Right ventricle myocardium superior (tissue), 1 donor: ENCODE measurements at regions of chr6 and their contacts with region 1.

Region 1: DNA sequence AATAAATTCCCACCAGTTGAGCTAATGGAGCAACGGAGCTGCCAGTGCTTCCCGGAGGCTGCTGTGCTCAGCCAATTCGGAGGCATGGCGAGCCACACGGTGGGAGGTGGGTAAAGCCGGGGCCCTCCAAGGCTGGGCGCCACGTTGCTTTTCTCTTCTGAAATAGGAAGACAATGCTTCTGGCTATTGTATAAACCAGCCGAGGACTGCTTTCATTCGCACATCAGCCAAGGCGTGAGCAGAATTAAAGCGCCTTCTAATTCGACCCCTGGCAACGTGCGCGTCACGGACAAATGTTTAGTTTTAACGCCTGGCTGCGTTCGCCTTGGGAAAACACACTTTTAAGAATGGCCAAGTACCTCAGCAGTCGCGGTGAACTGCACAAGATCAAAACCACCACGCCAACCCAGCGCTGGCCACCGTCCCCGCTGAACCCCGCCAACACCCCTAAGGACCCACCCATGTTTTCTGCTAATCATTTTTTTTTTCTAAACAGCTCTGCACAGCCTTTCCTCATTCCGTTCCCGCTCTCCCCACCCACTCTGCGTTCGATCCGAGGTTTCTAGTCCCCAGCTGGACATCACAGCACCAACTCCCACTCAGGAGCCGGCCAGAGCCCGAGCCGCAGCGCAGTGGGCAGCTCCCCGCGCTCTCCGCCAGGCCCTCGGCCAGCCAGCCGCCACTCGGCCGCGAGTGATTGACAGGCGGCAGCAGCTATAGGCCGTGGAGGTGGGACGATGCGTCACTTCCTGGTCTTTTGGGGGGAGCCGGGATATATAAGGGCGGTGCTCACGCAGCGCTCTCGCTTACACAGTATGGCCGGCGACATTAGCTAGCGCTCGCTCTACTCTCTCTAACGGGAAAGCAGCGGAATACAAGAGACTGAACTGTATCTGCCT is at the start of gene AMD1:
- DNase-seq: peak; percentile 99
- ATAC-seq: peak; percentile 89
- total RNA-seq, gene AMD1: 67.0 TPM

Region 2: GRCh38 chr6:110432285-110432900 is 441.8 kb before region 1 on chr6:
- intact Hi-C with region 1: no loop called
- DNase-seq: no peak
- ATAC-seq: no peak

Region 3: GRCh38 chr6:110537208-110538123 is 336.8 kb before region 1 on chr6:
- intact Hi-C with region 1: loop called (anchors 10 kb)
- DNase-seq: no peak
- ATAC-seq: no peak

Region 4: GRCh38 chr6:110682460-110682853 is 191.8 kb before region 1 on chr6:
- intact Hi-C with region 1: loop called (anchors 10 kb)
- DNase-seq: no peak
- ATAC-seq: peak; percentile 98

Region 5: DNA sequence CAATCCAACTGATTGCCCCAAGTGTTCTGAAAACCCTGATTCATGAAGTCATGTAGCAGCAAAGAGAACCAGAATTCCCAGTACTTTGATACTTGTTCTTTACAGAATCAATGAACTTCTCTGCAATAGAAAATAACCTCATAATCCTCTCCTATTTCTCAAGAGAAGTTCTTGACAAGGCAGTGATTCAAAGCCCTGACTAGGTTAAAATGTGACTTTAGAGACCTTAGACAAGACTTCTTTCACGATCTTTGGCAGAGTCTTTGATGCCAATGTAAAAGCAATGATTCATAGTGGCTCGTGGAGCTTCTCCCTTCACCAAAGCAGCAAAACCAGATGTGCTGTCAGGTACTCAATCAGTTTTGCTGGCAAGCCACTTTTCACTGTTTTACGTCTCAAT is 154.2 kb before region 1 on chr6:
- intact Hi-C with region 1: no loop called
- DNase-seq: no peak
- ATAC-seq: no peak

Region 6: GRCh38 chr6:110815217-110816109 is 58.8 kb before region 1 on chr6 and contains the start of gene CDK19:
- intact Hi-C with region 1: loop called (anchors 2 kb)
- DNase-seq: peak; percentile 99
- ATAC-seq: peak; percentile 97
- total RNA-seq, gene CDK19: 10.4 TPM